Psoas muscle (tissue), 8 donors: ENCODE measurements at regions of chr10 and their contacts with region 1.

Region 1: GRCh38 chr10:21989453-21990154 is 13.9 kb downstream of the DNAJC1 start:
- DNase-seq: peak; percentile 39 to 52
- ATAC-seq: peak; percentile 49 to 82 (median 69)
- H3K4me3 ChIP-seq: no peak overlapping the region
- H3K27ac ChIP-seq: no peak overlapping the region
- H3K4me1 ChIP-seq: peaks cover 4% of the 10 kb centered on the region
- H3K27me3 ChIP-seq: no peaks in the 10 kb centered on the region
- CTCF ChIP-seq: peak; percentile 50

Region 2: GRCh38 chr10:22210277-22210676 is 220.7 kb after region 1 on chr10:
- intact Hi-C with region 1: no loop called
- DNase-seq: no peak
- ATAC-seq: no peak
- H3K4me3 ChIP-seq: no peak overlapping the region
- H3K27ac ChIP-seq: no peak overlapping the region
- H3K4me1 ChIP-seq: no peaks in the 10 kb centered on the region
- H3K27me3 ChIP-seq: no peaks in the 10 kb centered on the region
- CTCF ChIP-seq: no peak

Region 3: GRCh38 chr10:22580711-22581110 is 591.1 kb after region 1 on chr10:
- intact Hi-C with region 1: loop called in 1 of 2 experiments (anchors 10 kb)
- DNase-seq: no peak
- ATAC-seq: peak in 2 of 4 donors; percentile 35 to 77
- H3K4me3 ChIP-seq: no peak overlapping the region
- H3K27ac ChIP-seq: no peak overlapping the region
- H3K4me1 ChIP-seq: peaks cover 3% of the 10 kb centered on the region
- H3K27me3 ChIP-seq: no peaks in the 10 kb centered on the region
- CTCF ChIP-seq: no peak